ENCODE measurements at regions of chr3 and their contacts with region 1.

Region 1: DNA sequence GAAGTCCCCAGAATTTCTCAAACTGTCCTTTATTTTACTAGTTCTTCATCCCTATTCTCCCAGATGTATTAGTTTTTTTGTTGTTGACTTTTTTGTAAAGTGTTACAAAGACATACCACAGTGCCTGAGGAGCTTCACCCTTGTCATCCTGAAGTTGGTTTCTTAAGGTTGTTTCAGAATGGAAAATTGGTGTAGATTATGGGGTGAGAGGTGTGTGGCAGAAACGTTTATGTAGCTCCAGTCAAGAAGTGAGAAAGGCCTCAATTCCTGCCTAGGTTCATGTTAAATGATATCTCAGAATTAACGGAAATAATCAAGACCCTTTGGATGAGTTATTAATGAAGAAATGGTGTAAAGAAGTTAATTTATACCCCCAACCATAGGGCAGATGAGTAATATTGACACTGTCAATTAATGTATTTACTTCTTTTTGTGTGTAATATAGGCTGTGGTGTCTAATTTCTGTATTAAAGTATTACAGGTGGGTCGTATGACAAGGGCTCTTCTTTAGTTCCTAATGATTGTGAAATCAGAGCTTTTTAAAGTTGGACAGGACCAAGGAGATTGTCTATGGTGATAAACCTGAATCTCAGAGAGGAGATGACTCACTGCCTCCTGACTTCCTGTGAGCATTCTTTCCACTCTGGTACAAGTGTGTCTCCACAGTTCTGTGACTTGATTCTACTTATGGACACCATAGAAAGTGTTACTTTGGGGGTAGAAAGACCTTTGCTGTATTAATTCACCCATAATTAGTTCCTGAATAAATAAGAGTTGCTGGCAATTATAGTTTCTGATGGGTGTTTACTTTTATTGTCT is 7.0 kb downstream of the EDEM1 start:
- DNase-seq: peak; percentile 32 to 87 (median 47)
- H3K4me3 ChIP-seq: no peak overlapping the region
- H3K4me3 Mint-ChIP-seq: peak overlapping the region in 7 of 8 donors; percentile 37 to 81 (median 63)
- H3K27ac ChIP-seq: peak overlapping the region; percentile 54
- H3K27ac Mint-ChIP-seq: peak overlapping the region; percentile 89 to 98 (median 94)
- H3K4me1 ChIP-seq: peaks cover 88% of the 10 kb centered on the region
- H3K4me1 Mint-ChIP-seq: peaks cover 71 to 92% (median 80%) of the 10 kb centered on the region in 4 donors
- H3K27me3 ChIP-seq: no peaks in the 10 kb centered on the region
- H3K27me3 Mint-ChIP-seq: no peaks in the 10 kb centered on the region

Region 2: GRCh38 chr3:5122030-5122740 is 72.4 kb before region 1 on chr3 and contains the start of gene ARL8B:
- CTCF ChIA-PET with region 1: interaction called, 12 read pairs
- POLR2A ChIA-PET with region 1: interaction called, 43 read pairs
- intact Hi-C with region 1: no loop called
- DNase-seq: peak; percentile 87 to 90 (median 88)
- H3K4me3 ChIP-seq: peak within 1 kb of the TSS; percentile 64 to 93
- H3K4me3 Mint-ChIP-seq: peak within 1 kb of the TSS; percentile 84 to 97 (median 92)
- H3K27ac ChIP-seq: peak within 1 kb of the TSS; percentile 94
- H3K27ac Mint-ChIP-seq: peak within 1 kb of the TSS; percentile 92 to 97 (median 93)
- H3K4me1 ChIP-seq: peaks cover 50% of the 10 kb centered on the region
- H3K4me1 Mint-ChIP-seq: peaks cover 26 to 52% (median 39%) of the 10 kb centered on the region in 4 donors
- H3K27me3 ChIP-seq: no peaks in the 10 kb centered on the region
- H3K27me3 Mint-ChIP-seq: no peaks in the 10 kb centered on the region
- total RNA-seq, gene ARL8B: 55.5 to 60.5 TPM

Region 3: GRCh38 chr3:5181469-5182141 is 12.9 kb before region 1 on chr3:
- CTCF ChIA-PET with region 1: interaction called, 14 read pairs
- POLR2A ChIA-PET with region 1: interaction called, 206 read pairs
- intact Hi-C with region 1: no loop called
- DNase-seq: peak in 2 of 5 donors; percentile 26 to 33
- H3K4me3 ChIP-seq: no peak overlapping the region
- H3K4me3 Mint-ChIP-seq: peak overlapping the region in 2 of 8 donors; percentile 8 to 33
- H3K27ac ChIP-seq: no peak overlapping the region
- H3K27ac Mint-ChIP-seq: peak overlapping the region in 5 of 7 donors; percentile 24 to 86 (median 63)
- H3K4me1 ChIP-seq: peaks cover 15% of the 10 kb centered on the region
- H3K4me1 Mint-ChIP-seq: peaks cover 20 to 27% (median 22%) of the 10 kb centered on the region in 4 donors
- H3K27me3 ChIP-seq: no peaks in the 10 kb centered on the region
- H3K27me3 Mint-ChIP-seq: no peaks in the 10 kb centered on the region

Region 4: GRCh38 chr3:5339967-5340535 is 145.5 kb after region 1 on chr3:
- CTCF ChIA-PET with region 1: no interaction called
- POLR2A ChIA-PET with region 1: no interaction called
- intact Hi-C with region 1: no loop called
- DNase-seq: no peak
- H3K4me3 ChIP-seq: no peak overlapping the region
- H3K4me3 Mint-ChIP-seq: no peak overlapping the region
- H3K27ac ChIP-seq: no peak overlapping the region
- H3K27ac Mint-ChIP-seq: no peak overlapping the region
- H3K4me1 ChIP-seq: no peaks in the 10 kb centered on the region
- H3K4me1 Mint-ChIP-seq: no peaks in the 10 kb centered on the region
- H3K27me3 ChIP-seq: no peaks in the 10 kb centered on the region
- H3K27me3 Mint-ChIP-seq: peaks cover 2 to 5% of the 10 kb centered on the region in 2 donors

Measured in CD4-positive, alpha-beta memory T cell (primary cell).